Heart left ventricle (tissue), 16 donors: ENCODE measurements at regions of chr1 and their contacts with region 1.

Region 1: DNA sequence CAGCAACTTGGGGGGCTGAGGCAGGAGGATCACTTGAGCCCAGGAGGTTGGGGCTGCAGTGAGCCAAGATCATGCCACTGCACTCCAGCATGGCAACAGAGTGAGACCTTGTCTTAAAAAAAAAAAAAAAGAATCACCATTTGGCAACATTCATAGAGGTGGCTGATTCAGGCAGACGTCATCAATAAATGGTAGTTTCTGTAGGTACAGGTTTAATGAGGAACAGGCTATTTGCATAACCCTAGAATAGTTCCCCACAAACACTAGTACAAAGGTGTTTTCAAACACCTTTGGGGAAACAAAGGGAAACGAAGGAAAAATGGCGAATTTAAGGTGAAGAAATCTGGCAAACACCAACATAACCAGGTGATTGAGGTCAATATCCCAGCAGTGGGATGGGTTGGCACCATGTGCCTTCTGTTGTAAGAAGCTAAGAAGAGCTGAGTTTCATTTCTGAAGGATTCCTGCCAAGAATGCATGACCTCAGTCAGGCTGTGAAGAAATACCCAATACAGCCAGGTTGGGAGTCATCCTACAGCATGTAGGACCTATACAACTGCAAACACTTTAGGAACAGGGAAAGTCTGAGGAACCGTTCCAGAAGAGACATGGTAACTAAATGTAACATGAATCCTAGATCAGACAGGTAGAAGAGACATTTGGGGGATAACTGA is 5.6 kb downstream of the LPAR3 start:
- DNase-seq: no peak
- ATAC-seq: no peak
- H3K4me3 ChIP-seq: no peak overlapping the region
- H3K27ac ChIP-seq: no peak overlapping the region
- H3K4me1 ChIP-seq: peaks cover 0 to 13% (median under 1%) of the 10 kb centered on the region in 12 donors
- H3K27me3 ChIP-seq: peaks cover 0 to 9% (median 0%) of the 10 kb centered on the region in 9 donors
- CTCF ChIP-seq: no peak
- POLR2A ChIP-seq: no peak

Region 2: GRCh38 chr1:84795966-84796600 is 91.3 kb before region 1 on chr1:
- intact Hi-C with region 1: loop called in 2 of 10 experiments (anchors 10 kb)
- DNase-seq: no peak
- ATAC-seq: peak in 2 of 4 donors; percentile 54 to 72
- H3K4me3 ChIP-seq: no peak overlapping the region
- H3K27ac ChIP-seq: peak overlapping the region in 3 of 12 donors; percentile 14 to 50 (median 33)
- H3K4me1 ChIP-seq: peaks cover 0 to 11% (median 0%) of the 10 kb centered on the region in 12 donors
- H3K27me3 ChIP-seq: no peaks in the 10 kb centered on the region
- CTCF ChIP-seq: no peak
- POLR2A ChIP-seq: no peak